CD8-positive, alpha-beta memory T cell (primary cell): ENCODE measurements at regions of chr2 and their contacts with region 1.

Region 1: DNA sequence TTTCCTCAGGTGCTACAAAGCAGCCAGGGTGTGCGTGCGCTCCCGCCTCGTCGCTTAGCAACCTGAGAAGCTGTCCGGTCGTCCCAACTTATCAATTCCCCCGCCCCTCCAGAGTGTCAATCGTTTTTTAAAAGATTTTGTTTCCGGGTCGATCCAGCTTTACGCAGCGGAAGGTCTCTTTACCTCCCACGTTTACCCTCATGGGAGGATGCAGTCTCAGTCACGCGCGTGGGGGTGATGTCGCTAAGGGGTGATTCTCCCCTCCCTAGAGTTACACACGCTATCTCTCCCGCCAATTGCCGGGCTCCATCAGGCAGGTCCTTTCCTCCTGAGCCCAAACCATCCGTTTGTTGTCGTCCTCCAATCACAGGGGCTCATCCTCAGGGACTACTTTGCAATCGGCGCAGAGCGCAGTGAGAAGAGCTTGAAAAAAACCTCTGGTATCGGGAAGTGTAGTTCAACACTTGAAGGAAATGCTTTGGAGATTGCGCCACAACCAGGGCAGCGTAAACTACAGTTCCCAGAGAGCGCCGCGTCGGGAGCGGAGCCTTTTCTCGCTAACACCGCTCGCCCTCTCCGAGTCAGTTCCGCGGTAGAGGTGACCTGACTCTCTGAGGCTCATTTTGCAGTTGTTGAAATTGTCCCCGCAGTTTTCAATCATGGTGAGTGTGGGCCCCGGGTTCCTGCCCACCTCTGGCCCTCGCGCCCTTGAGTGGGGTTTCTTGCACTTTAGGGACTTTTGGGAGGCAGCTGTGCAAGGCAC is at the starts of genes MDH1 and WDPCP:
- DNase-seq: peak; percentile 87 to 97 (median 96)
- H3K4me3 ChIP-seq: peak within 1 kb of the TSS; percentile 84
- H3K4me3 Mint-ChIP-seq: peak within 1 kb of the TSS; percentile 89 to 97 (median 93)
- H3K27ac ChIP-seq: peak within 1 kb of the TSS; percentile 87
- H3K27ac Mint-ChIP-seq: peak within 1 kb of the TSS; percentile 90 to 99 (median 97)
- H3K4me1 ChIP-seq: peaks cover 13% of the 10 kb centered on the region
- H3K4me1 Mint-ChIP-seq: peaks cover 32 to 60% (median 39%) of the 10 kb centered on the region in 3 donors
- H3K27me3 ChIP-seq: no peaks in the 10 kb centered on the region
- H3K27me3 Mint-ChIP-seq: no peaks in the 10 kb centered on the region
- total RNA-seq, gene MDH1: 182 to 191 TPM
- total RNA-seq, gene WDPCP: 7.2 to 7.9 TPM

Region 2: DNA sequence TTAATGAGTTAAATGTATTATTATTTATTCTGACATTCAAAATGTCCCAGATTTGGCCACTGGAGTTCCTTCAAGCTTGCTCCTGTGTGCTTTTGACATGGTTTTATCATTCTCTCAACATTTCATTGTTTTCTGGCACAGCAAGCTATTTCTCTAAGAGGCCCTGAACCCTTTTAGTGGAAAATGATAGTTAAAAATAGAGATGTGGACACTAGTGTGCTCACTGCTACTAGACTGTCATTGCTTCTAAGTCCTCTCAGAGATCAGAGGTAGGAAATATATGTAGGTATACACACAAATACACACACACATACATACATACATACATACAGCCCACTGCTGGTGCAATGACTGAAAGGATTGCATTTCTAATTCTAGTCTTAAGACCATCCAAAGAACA is 25.8 kb before region 1 on chr2:
- CTCF ChIA-PET with region 1: no interaction called
- POLR2A ChIA-PET with region 1: no interaction called
- DNase-seq: no peak
- H3K4me3 ChIP-seq: no peak overlapping the region
- H3K4me3 Mint-ChIP-seq: no peak overlapping the region
- H3K27ac ChIP-seq: no peak overlapping the region
- H3K27ac Mint-ChIP-seq: no peak overlapping the region
- H3K4me1 ChIP-seq: no peaks in the 10 kb centered on the region
- H3K4me1 Mint-ChIP-seq: peaks cover 3 to 4% (median 4%) of the 10 kb centered on the region in 3 donors
- H3K27me3 ChIP-seq: no peaks in the 10 kb centered on the region
- H3K27me3 Mint-ChIP-seq: no peaks in the 10 kb centered on the region

Region 3: DNA sequence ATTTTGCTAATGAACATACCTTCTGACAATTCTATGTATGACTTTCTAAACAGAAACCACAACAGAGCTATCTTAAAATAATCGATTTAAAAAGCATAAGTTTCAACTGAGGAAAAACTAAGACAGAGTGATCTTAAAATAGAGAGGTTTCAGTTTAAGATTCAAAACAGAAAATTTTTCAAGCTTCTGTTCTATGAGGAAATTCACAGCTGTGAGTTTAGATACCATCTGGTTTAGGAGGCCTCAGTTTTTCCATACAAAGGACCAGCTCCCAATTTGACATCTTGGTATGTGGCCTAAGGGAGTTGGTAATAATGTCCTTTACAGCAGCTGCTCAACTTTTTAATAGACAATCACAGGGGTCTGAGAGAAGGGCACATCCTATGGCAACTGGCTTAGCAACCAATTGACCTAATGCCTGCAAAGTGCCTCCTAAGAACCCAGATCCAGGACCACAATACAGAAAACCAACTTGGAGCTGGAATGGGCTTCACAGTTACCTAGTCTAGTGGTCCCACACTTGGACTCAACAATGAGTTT is 39.9 kb after region 1 on chr2:
- CTCF ChIA-PET with region 1: no interaction called
- POLR2A ChIA-PET with region 1: no interaction called
- DNase-seq: no peak
- H3K4me3 ChIP-seq: no peak overlapping the region
- H3K4me3 Mint-ChIP-seq: no peak overlapping the region
- H3K27ac ChIP-seq: no peak overlapping the region
- H3K27ac Mint-ChIP-seq: no peak overlapping the region
- H3K4me1 ChIP-seq: no peaks in the 10 kb centered on the region
- H3K4me1 Mint-ChIP-seq: peaks cover 0 to 6% (median 0%) of the 10 kb centered on the region in 3 donors
- H3K27me3 ChIP-seq: no peaks in the 10 kb centered on the region
- H3K27me3 Mint-ChIP-seq: peaks cover 9 to 43% of the 10 kb centered on the region in 2 donors

Region 4: DNA sequence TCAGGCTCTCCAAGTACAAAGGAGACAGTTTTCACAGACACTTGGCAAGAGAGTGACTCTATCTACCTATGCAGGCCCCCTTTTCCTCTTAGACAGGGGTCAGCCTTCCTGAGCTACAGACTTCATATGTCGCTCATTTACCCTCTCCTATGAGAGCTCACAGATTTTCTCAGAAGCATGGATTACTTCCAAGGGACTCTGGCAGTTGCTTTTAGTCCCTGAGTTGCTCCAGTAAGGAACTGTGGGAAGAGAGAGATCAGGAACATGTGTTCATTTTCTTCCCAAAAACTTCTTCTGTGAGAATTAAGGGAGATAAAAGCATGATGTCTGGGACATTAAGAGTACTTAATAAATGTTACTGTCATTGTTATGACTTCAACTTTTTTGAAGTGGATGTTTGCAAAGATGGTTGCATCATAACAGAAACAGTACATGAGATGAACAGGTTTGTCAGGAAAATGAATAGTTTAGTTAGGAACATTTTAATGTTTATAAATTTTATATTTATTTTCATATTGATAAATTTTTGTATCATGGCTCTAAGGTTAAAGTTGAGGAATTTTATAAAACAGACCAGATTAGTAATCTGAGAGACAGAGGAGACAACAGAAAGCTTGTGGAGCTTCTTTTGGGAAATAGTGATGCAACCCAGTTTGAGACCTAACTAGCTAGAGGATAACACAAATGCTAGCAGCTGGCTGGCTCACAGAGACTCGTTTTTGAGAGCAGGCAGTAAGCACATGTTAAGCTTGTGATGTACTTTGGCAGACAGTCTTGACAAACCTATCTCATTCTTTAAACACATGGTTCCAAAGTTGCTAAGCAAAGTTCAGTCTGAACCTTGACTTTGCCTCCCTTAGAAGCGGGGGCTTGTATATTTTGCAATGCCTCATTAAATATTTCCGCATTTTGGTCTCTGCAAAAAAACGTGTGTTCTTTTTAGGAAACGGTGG is 231.5 kb after region 1 on chr2:
- CTCF ChIA-PET with region 1: no interaction called
- POLR2A ChIA-PET with region 1: no interaction called
- DNase-seq: no peak
- H3K4me3 ChIP-seq: no peak overlapping the region
- H3K4me3 Mint-ChIP-seq: no peak overlapping the region
- H3K27ac ChIP-seq: no peak overlapping the region
- H3K27ac Mint-ChIP-seq: no peak overlapping the region
- H3K4me1 ChIP-seq: no peaks in the 10 kb centered on the region
- H3K4me1 Mint-ChIP-seq: no peaks in the 10 kb centered on the region
- H3K27me3 ChIP-seq: no peaks in the 10 kb centered on the region
- H3K27me3 Mint-ChIP-seq: peaks cover 6 to 16% of the 10 kb centered on the region in 2 donors

Region 5: GRCh38 chr2:63841254-63842022 is 252.9 kb after region 1 on chr2 and contains the start of gene UGP2:
- CTCF ChIA-PET with region 1: no interaction called
- POLR2A ChIA-PET with region 1: interaction called, 19 read pairs
- DNase-seq: peak; percentile 78 to 89 (median 84)
- H3K4me3 ChIP-seq: peak within 1 kb of the TSS; percentile 97
- H3K4me3 Mint-ChIP-seq: peak within 1 kb of the TSS; percentile 95 to 100 (median 98)
- H3K27ac ChIP-seq: peak within 1 kb of the TSS; percentile 85
- H3K27ac Mint-ChIP-seq: peak within 1 kb of the TSS; percentile 95 to 99 (median 98)
- H3K4me1 ChIP-seq: peaks cover 36% of the 10 kb centered on the region
- H3K4me1 Mint-ChIP-seq: peaks cover 52 to 65% (median 61%) of the 10 kb centered on the region in 3 donors
- H3K27me3 ChIP-seq: no peaks in the 10 kb centered on the region
- H3K27me3 Mint-ChIP-seq: no peaks in the 10 kb centered on the region
- total RNA-seq, gene UGP2: 59.2 to 59.8 TPM